Activated B cell treated with CpG ODN at 0.5 μM for 24 hours (primary cell): ENCODE measurements at regions of chr20 and their contacts with region 1.

Region 1: DNA sequence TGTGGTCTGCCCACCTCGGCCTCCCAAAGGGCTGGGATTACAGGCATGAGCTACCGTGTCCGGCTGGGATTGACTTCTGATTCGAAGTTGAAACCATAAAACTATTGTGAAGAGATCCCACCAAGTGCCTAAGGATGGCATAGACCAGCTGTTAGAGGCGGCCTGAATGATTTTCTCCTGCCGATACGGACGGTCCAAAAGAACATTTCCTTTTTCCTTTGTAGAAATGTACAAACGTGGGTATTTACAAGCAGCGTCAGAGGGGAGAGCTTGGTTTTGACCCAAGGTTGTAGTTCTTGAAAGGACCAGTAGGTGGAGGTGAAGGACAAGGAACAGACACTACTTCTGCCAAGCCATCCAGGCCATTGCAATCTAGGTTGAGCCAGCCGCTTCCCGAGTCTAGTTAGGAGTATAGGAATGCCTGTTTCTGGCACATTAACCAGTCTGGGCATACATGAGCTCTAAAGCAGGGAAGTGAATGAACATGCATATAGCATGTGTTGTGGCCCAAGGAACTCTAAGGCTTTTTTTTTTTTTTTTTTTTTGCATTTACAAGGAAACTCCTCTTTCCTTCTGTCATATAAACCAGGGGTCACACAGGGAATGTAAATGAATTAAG is 29.1 kb downstream of the MOCS3 start:
- DNase-seq: no peak
- ATAC-seq: peak; percentile 94
- H3K4me3 Mint-ChIP-seq: no peak overlapping the region
- H3K27ac Mint-ChIP-seq: no peak overlapping the region
- H3K4me1 Mint-ChIP-seq: peaks cover 10% of the 10 kb centered on the region
- H3K27me3 Mint-ChIP-seq: peaks cover 22% of the 10 kb centered on the region
- CTCF ChIP-seq: peak; percentile 44

Region 2: GRCh38 chr20:51095633-51096513 is 108.2 kb after region 1 on chr20:
- CTCF ChIA-PET with region 1: no interaction called
- POLR2A ChIA-PET with region 1: no interaction called
- intact Hi-C with region 1: no loop called
- DNase-seq: no peak
- ATAC-seq: no peak
- H3K4me3 Mint-ChIP-seq: no peak overlapping the region
- H3K27ac Mint-ChIP-seq: peak overlapping the region; percentile 37
- H3K4me1 Mint-ChIP-seq: peaks cover 79% of the 10 kb centered on the region
- H3K27me3 Mint-ChIP-seq: peaks cover 15% of the 10 kb centered on the region
- CTCF ChIP-seq: no peak

Region 3: GRCh38 chr20:51220293-51220706 is 232.6 kb after region 1 on chr20:
- CTCF ChIA-PET with region 1: no interaction called
- POLR2A ChIA-PET with region 1: no interaction called
- intact Hi-C with region 1: no loop called
- DNase-seq: peak; percentile 22
- ATAC-seq: no peak
- H3K4me3 Mint-ChIP-seq: no peak overlapping the region
- H3K27ac Mint-ChIP-seq: no peak overlapping the region
- H3K4me1 Mint-ChIP-seq: peaks cover 18% of the 10 kb centered on the region
- H3K27me3 Mint-ChIP-seq: peaks cover 23% of the 10 kb centered on the region
- CTCF ChIP-seq: no peak

Region 4: GRCh38 chr20:51306503-51307358 is 319.0 kb after region 1 on chr20:
- CTCF ChIA-PET with region 1: interaction called, 109 read pairs
- POLR2A ChIA-PET with region 1: interaction called, 6 read pairs
- intact Hi-C with region 1: loop called (anchors 1 kb)
- DNase-seq: peak; percentile 65
- ATAC-seq: peak; percentile 98
- H3K4me3 Mint-ChIP-seq: no peak overlapping the region
- H3K27ac Mint-ChIP-seq: no peak overlapping the region
- H3K4me1 Mint-ChIP-seq: no peaks in the 10 kb centered on the region
- H3K27me3 Mint-ChIP-seq: peaks cover 25% of the 10 kb centered on the region
- CTCF ChIP-seq: no peak

Region 5: GRCh38 chr20:51595058-51595532 is 607.4 kb after region 1 on chr20:
- CTCF ChIA-PET with region 1: interaction called, 22 read pairs
- POLR2A ChIA-PET with region 1: no interaction called
- intact Hi-C with region 1: loop called (anchors 1 kb)
- DNase-seq: peak; percentile 57
- ATAC-seq: peak; percentile 93
- H3K4me3 Mint-ChIP-seq: peak overlapping the region; percentile 55
- H3K27ac Mint-ChIP-seq: no peak overlapping the region
- H3K4me1 Mint-ChIP-seq: peaks cover 21% of the 10 kb centered on the region
- H3K27me3 Mint-ChIP-seq: peaks cover 38% of the 10 kb centered on the region
- CTCF ChIP-seq: peak; percentile 91

Region 6: GRCh38 chr20:51966291-51966971 is 978.7 kb after region 1 on chr20:
- CTCF ChIA-PET with region 1: no interaction called
- POLR2A ChIA-PET with region 1: no interaction called
- intact Hi-C with region 1: loop called (anchors 10 kb)
- DNase-seq: no peak
- ATAC-seq: no peak
- H3K4me3 Mint-ChIP-seq: no peak overlapping the region
- H3K27ac Mint-ChIP-seq: no peak overlapping the region
- H3K4me1 Mint-ChIP-seq: no peaks in the 10 kb centered on the region
- H3K27me3 Mint-ChIP-seq: peaks cover 11% of the 10 kb centered on the region
- CTCF ChIP-seq: no peak

Region 7: DNA sequence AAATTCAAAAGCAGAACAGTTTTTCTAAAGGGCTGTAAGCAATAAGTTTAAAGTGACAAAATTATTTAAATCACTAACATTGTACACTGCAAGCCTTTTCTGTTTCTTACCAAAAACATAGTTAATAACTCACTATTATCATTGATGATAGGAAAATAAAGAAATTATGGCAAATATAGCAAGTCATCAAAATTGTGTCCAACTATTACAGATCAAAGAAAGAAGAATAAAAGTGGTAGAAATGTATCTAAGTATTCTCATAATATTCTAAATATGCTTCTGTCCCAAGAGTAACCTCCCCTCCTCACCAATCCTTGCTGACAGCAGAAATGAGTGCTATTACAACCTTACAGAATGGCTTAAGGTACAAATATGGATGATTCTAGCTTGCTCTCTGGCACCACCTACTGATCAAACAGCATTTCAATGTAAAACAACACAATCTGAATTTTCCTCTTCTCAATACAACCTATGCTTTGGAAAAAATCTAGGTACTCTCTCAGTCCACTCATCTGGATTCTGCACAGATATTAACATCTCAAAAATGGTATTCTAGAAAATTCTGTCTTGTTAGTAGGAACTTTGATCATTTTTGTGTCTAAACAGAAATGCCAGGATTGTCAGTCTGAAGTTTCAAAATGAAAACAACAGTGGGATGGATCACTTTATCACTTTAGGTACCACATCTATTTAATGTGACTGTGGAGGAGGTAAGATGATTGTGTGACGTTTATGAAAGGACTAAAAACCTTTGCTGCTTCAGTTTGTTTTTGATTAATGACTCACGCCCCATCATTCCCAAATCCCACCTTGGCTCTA is 1162.9 kb after region 1 on chr20:
- CTCF ChIA-PET with region 1: interaction called, 3 read pairs
- POLR2A ChIA-PET with region 1: no interaction called
- intact Hi-C with region 1: loop called (anchors 1 kb)
- DNase-seq: no peak
- ATAC-seq: no peak
- H3K4me3 Mint-ChIP-seq: no peak overlapping the region
- H3K27ac Mint-ChIP-seq: no peak overlapping the region
- H3K4me1 Mint-ChIP-seq: no peaks in the 10 kb centered on the region
- H3K27me3 Mint-ChIP-seq: no peaks in the 10 kb centered on the region
- CTCF ChIP-seq: peak; percentile 36